Right ventricle myocardium inferior (tissue), 1 donor: ENCODE measurements at regions of chr17 and their contacts with region 1.

Region 1: DNA sequence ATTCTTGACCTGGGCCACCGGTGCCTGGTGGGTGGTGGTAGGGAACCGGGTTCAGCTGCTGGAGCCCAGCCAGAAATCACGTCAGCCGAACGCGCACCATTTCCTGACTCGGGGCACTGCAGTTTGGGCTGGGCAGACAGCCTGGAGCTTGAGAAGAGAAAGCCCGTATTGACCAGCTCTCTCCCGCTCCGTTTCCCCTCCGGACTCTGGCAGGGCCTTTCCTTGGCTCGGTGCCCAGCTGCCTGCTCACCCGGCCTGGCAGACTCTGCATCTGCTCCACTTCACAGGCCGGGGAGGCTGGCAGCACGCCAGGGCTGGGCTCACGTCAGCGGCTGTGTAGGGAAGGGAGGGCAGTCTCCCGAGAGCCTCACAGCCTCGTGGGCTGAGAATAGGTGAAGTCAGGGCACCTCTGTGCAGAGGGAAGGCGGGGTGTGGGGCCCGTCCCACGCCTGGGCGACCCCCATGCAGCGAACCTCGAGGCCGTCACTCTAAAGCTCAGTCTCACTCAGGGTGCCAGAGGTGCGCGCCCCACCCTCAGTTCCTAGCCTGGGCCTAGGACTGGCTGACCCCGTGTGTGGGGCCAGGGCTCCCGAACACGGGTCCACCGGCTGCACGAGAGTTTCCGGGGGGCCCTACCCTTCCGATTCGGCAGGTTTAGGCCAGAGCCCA is 59.1 kb downstream of the OR1D5 start:
- DNase-seq: peak; percentile 99
- ATAC-seq: peak; percentile 96

Region 2: GRCh38 chr17:2853111-2853721 is 151.1 kb before region 1 on chr17:
- intact Hi-C with region 1: loop called (anchors 2 kb)
- DNase-seq: peak; percentile 79
- ATAC-seq: peak; percentile 62

Region 3: GRCh38 chr17:2940352-2940751 is 63.9 kb before region 1 on chr17:
- intact Hi-C with region 1: loop called (anchors 1 kb)
- DNase-seq: no peak
- ATAC-seq: peak; percentile 97

Region 4: DNA sequence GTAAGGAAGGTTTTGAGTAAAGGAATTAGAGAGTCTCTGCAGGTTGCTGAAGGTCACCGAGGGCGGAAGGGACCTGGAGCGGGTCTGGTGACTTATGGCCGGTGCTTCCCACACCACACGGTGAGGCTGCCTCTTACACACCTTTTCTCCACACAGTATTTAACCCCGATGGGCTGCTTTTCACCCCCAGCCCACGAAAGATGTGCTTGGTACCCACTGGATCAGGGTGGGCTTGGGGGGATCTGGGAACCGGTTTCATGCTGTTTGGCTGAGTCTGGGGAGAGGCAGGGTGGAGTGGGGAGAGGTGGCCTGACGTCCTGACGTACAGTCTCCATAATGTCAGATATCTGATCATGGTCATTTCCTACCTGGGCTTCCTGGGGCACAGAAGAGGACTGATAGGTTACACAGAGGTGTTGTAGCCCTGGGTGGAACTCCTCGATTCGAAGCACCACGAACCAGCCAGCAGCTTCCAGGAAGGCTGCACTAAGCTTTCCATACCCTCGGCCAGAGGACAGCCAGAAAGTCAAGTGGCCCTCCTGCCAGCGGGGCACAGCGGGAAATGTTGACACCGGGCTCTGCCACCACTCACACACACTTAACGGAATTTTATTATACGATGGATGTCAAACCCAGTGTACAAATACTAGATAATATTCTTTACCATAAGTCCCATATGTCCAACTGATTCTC is 25.1 kb after region 1 on chr17:
- intact Hi-C with region 1: loop called (anchors 1 kb)
- DNase-seq: peak; percentile 78
- ATAC-seq: peak; percentile 87